Activated naive CD4-positive, alpha-beta T cell treated with anti-CD3 and anti-CD28 coated beads for 36 hours (primary cell): ENCODE measurements at regions of chr1 and their contacts with region 1.

Region 1: GRCh38 chr1:246329900-246330299 is 177.2 kb downstream of the SMYD3 start:
- DNase-seq: peak; percentile 65
- H3K4me3 Mint-ChIP-seq: no peak overlapping the region
- H3K27ac Mint-ChIP-seq: peak overlapping the region; percentile 67
- H3K4me1 Mint-ChIP-seq: peaks cover 54% of the 10 kb centered on the region
- H3K27me3 Mint-ChIP-seq: no peaks in the 10 kb centered on the region

Region 2: DNA sequence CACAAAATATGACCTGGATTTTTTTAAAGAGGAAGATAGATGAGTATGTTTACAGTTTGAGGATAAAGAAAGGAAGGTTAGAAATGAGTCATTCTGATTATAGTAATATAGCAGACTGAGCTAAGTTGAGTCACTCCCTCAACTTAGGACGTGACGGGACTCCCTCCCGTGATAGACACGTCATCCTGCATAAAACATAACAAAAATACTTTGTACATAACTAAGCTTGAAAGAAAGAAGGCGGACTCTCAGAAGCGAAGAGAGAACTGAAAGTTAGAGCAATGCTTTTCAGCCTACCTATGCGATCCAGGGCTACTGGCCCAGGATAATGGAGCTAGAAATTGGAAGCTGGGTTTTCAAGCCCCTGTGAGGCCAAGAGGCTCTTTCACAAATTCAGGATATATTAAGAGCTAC is 1730.0 kb before region 1 on chr1:
- CTCF ChIA-PET with region 1: no interaction called
- intact Hi-C with region 1: loop called (anchors 5 kb)
- DNase-seq: peak; percentile 79
- H3K4me3 Mint-ChIP-seq: peak overlapping the region; percentile 64
- H3K27ac Mint-ChIP-seq: peak overlapping the region; percentile 87
- H3K4me1 Mint-ChIP-seq: peaks cover 21% of the 10 kb centered on the region
- H3K27me3 Mint-ChIP-seq: peaks cover 2% of the 10 kb centered on the region

Region 3: GRCh38 chr1:245156081-245156735 is 1173.7 kb before region 1 on chr1:
- CTCF ChIA-PET with region 1: no interaction called
- intact Hi-C with region 1: loop called (anchors 5 kb)
- DNase-seq: peak; percentile 89
- H3K4me3 Mint-ChIP-seq: peak overlapping the region; percentile 71
- H3K27ac Mint-ChIP-seq: no peak overlapping the region
- H3K4me1 Mint-ChIP-seq: peaks cover 17% of the 10 kb centered on the region
- H3K27me3 Mint-ChIP-seq: peaks cover 61% of the 10 kb centered on the region

Region 4: DNA sequence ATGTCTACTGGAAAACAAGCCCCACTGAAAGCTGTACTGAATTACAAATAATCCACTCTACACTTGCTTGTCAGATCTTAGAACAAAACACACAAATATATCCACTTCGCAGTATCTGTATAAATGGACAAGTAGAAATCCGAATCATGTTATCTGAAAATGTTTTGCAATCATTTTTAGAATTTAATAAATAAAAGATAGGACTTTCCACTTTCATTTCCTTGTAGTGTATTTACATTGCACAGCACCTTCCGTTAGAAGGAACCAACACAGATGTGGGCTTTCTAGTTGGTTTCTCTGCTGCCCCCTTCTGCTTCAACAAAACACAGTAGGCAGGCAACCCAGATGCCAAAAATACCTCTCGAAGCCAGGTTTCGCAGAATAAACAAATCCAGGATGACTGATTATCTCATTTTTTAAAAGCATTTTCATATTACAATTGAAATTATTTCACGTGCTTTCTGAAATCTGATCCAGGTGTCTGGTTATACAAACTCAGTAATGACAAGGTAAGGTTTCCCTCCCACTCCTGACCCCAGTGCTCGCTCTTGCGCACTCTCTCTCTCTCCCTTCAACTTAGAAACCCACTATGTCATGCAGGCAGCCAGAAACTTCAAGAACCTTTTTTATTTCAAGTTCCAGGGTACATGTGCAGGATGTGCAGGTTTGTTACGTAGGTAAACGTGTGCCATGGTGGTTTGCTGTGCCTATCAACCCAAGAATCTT is 212.7 kb before region 1 on chr1:
- CTCF ChIA-PET with region 1: no interaction called
- intact Hi-C with region 1: loop called (anchors 5 kb)
- DNase-seq: peak; percentile 45
- H3K4me3 Mint-ChIP-seq: peak overlapping the region; percentile 3
- H3K27ac Mint-ChIP-seq: peak overlapping the region; percentile 42
- H3K4me1 Mint-ChIP-seq: peaks cover 19% of the 10 kb centered on the region
- H3K27me3 Mint-ChIP-seq: no peaks in the 10 kb centered on the region

Region 5: DNA sequence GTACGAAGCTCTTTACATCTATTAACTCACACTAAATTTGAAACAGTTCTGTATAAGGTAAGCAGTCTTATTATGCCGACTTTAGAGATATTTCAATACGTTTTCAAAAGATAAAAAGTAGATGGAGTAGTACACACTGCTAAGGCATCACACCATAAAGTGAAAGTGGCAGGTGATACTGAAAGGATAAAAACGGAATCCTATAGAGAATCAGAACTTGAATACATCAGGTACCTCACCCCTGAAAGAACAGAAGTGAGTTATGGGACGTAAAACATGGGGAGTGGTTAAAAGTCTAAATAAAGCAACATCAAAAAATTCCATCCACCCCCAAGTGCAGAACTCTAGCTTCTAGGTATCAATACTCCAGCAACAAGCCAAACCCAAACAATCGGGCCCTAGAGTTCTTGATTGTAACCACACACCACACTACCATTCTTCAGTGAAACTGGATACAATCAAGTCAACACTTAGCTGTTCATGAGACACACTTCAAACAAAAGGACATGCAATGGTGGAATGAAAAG is 34.6 kb after region 1 on chr1:
- CTCF ChIA-PET with region 1: no interaction called
- intact Hi-C with region 1: loop called (anchors 1 kb)
- DNase-seq: no peak
- H3K4me3 Mint-ChIP-seq: peak overlapping the region; percentile 34
- H3K27ac Mint-ChIP-seq: peak overlapping the region; percentile 5
- H3K4me1 Mint-ChIP-seq: peaks cover 17% of the 10 kb centered on the region
- H3K27me3 Mint-ChIP-seq: no peaks in the 10 kb centered on the region

Region 6: GRCh38 chr1:247103859-247104591 is 774.1 kb after region 1 on chr1 and contains the start of gene ZNF669:
- CTCF ChIA-PET with region 1: no interaction called
- intact Hi-C with region 1: loop called (anchors 2 kb)
- DNase-seq: peak; percentile 97
- H3K4me3 Mint-ChIP-seq: peak within 1 kb of the TSS; percentile 88
- H3K27ac Mint-ChIP-seq: peak within 1 kb of the TSS; percentile 90
- H3K4me1 Mint-ChIP-seq: peaks cover 17% of the 10 kb centered on the region
- H3K27me3 Mint-ChIP-seq: peaks cover 12% of the 10 kb centered on the region
- total RNA-seq, gene ZNF669: 8.2 to 8.4 TPM